AG04450 (cell line): ENCODE measurements at regions of chr6 and their contacts with region 1.

Region 1: DNA sequence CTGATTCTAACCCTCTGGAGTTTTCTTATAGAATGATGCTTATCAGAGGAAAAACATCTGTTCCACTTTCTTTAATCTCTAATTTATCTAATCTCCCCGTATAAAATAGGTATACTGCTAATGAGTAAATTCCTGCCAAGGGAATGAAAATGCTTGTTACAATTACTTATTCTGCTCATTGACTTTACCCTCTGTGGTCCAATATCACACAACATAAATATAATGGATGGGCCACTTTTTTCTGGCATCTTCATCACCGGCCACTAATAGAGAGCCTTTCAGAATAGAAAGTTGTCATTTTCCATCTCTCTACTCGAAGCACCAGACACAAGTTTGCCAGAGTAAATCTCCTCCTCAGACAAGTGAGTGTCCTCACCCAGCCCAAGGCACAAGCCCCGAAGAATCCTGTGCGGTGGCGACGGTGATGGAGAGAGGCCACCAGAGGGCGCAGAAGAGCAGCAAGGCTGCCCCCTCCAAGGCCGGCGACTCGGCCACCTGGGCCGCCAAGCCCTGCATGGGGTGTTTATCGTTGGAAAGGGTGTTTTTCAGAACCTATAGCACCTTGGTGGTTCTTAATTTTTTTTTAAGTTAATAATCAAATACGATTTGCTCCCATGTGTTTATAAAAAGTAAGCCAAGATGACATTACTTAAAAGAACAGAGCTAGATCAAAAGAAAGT is 212.9 kb upstream of the ARID1B start:
- DNase-seq: peak; percentile 30
- H3K4me3 ChIP-seq: no peak overlapping the region
- H3K27ac ChIP-seq: no peak overlapping the region
- H3K27me3 ChIP-seq: no peaks in the 10 kb centered on the region
- CTCF ChIP-seq: peak; percentile 96

Region 2: DNA sequence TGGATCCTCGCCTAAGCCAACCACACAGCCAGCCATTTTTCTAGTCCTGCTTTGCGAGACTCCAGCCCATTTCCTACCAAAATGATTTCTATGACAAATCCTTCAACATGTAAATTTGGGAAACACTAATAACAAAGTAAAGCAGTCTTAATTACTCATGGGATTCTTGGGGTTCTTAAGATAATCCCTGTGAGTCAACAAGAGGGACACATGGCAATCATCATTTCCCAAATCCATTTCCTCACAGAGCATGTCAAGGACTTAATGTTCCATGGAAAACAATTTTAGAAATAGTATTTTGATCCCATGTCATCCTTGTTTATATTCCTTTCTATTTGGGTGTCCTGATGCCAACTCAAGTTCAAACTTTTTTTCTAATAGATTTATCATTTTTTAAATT is 785.9 kb before region 1 on chr6:
- CTCF ChIA-PET with region 1: interaction called, 13 read pairs
- POLR2A ChIA-PET with region 1: no interaction called
- DNase-seq: no peak
- H3K4me3 ChIP-seq: no peak overlapping the region
- H3K27ac ChIP-seq: no peak overlapping the region
- H3K27me3 ChIP-seq: no peaks in the 10 kb centered on the region
- CTCF ChIP-seq: no peak

Region 3: GRCh38 chr6:156378853-156379252 is 185.4 kb before region 1 on chr6:
- CTCF ChIA-PET with region 1: no interaction called
- POLR2A ChIA-PET with region 1: no interaction called
- DNase-seq: no peak
- H3K4me3 ChIP-seq: no peak overlapping the region
- H3K27ac ChIP-seq: no peak overlapping the region
- H3K27me3 ChIP-seq: no peaks in the 10 kb centered on the region
- CTCF ChIP-seq: no peak